Activated T-helper 2 cell treated with anti-CD3 and anti-CD28 coated beads, Interferon-gamma antibody, Interleukin-2, Interleukin-4, amounts not matched to agents 10 μg/mL and 5 μg/mL and 100 μg/mL, durations not matched to agents 14 hours and 24 hours and 36 hours (primary cell): ENCODE measurements at regions of chr1 and their contacts with region 1.

Region 1: GRCh38 chr1:171313835-171314320 is at the start of gene FMO4:
- DNase-seq: peak; percentile 78
- H3K4me3 Mint-ChIP-seq: peak within 1 kb of the TSS; percentile 76
- H3K27ac Mint-ChIP-seq: peak within 1 kb of the TSS; percentile 64
- H3K4me1 Mint-ChIP-seq: peaks cover 9% of the 10 kb centered on the region
- H3K27me3 Mint-ChIP-seq: no peaks in the 10 kb centered on the region
- total RNA-seq, gene FMO4: 1.5 and 1.8 TPM in 2 replicates

Region 2: DNA sequence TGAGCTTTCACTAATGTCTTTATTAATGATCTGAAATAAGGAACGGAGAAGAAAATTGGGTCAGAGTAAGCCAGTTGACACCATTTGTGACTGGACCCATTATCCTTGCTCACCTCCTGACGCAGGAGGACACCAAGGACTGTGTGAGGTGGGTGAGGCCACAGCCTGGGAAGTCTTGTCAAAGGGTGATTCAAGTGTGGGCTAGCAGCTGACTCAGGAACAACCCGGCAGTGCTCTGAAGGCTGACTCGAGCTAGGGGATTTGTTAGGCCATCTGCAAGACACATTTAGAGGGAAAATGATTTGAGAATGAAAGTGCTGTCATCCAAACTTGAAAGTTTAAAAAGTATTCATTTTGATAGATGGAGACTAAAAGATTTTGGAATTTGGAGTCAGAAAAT is 628.7 kb before region 1 on chr1:
- intact Hi-C with region 1: loop called (anchors 5 kb)
- DNase-seq: no peak
- H3K4me3 Mint-ChIP-seq: no peak overlapping the region
- H3K27ac Mint-ChIP-seq: no peak overlapping the region
- H3K4me1 Mint-ChIP-seq: peaks cover 4% of the 10 kb centered on the region
- H3K27me3 Mint-ChIP-seq: peaks cover 11% of the 10 kb centered on the region

Region 3: DNA sequence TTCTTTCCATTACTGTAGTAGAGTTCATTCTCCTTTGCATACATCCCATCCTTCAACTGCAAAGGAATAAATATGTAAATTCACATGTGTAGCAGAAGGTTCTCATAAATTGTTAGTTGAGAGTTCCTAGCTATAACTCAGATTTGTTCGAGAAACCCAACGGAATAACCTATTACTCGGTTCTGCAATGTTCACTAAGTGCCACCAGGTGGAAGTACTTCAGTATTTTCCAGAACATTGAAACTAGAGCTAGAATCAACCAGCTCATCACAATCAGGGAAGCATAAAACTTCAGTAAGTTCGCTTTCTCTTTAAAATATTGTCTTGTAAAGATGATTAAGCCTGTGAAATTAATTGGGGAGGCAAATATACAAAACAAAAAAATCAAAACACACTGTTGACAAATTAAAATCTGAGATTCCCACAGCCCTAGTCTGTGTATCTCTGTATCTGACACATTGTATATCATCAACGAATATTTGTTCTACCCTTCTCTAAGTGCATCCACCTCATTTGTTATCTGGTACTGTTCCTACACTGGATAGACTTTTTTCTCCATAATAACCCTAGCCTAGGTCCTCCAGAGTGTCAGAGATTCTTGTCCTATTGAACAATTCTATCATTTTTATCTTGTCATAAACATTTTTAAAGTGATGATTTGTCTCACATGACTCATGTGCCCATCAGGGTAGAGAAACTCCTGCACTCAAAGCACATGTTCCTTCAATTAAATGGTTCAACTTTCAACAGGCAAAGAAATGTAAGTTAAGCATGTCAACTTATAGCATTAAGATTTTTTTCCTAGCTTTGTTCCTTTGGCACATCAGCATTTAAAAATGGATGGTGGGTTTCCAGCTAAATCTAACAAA is 346.6 kb before region 1 on chr1:
- intact Hi-C with region 1: loop called (anchors 5 kb)
- DNase-seq: no peak
- H3K4me3 Mint-ChIP-seq: no peak overlapping the region
- H3K27ac Mint-ChIP-seq: no peak overlapping the region
- H3K4me1 Mint-ChIP-seq: no peaks in the 10 kb centered on the region
- H3K27me3 Mint-ChIP-seq: peaks cover 6% of the 10 kb centered on the region

Region 4: DNA sequence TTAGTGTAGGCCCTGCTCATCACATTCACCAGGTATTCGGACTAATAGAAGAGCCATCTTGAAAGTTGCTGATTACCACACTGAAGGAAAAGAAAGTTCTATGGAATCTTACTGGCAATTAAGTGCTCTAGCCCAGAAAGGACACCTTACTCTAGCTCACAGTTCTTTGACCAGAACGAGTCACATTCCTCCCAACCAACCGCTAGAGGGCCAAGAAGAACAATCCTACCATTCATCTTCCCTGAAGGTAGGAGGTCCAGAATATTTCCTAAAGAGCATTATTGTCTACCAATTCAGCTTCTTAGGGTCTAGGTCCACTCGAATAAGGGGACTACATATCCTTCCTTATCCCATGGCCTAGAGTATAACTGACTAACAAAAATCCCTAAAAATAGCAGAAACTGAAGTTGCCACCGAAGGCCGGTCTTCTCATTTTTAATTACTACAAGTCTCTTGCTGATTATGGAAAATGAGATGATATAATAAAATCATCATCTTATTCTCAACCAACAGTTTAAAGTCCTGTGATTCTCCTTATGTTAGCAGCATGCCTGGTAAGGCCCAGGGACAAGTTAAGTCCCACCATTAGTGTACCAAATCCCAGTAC is 68.3 kb before region 1 on chr1:
- intact Hi-C with region 1: loop called (anchors 2 kb)
- DNase-seq: no peak
- H3K4me3 Mint-ChIP-seq: no peak overlapping the region
- H3K27ac Mint-ChIP-seq: no peak overlapping the region
- H3K4me1 Mint-ChIP-seq: no peaks in the 10 kb centered on the region
- H3K27me3 Mint-ChIP-seq: peaks cover 25% of the 10 kb centered on the region